Left ventricle myocardium inferior (tissue), 1 donor: ENCODE measurements at regions of chr3 and their contacts with region 1.

Region 1: GRCh38 chr3:168847291-168847883 is 751.7 kb upstream of the GOLIM4 start:
- DNase-seq: no peak
- H3K4me3 ChIP-seq: no peak overlapping the region
- H3K27ac ChIP-seq: no peak overlapping the region
- H3K4me1 ChIP-seq: no peaks in the 10 kb centered on the region
- H3K27me3 ChIP-seq: peaks cover 29% of the 10 kb centered on the region
- CTCF ChIP-seq: peak; percentile 75

Region 2: DNA sequence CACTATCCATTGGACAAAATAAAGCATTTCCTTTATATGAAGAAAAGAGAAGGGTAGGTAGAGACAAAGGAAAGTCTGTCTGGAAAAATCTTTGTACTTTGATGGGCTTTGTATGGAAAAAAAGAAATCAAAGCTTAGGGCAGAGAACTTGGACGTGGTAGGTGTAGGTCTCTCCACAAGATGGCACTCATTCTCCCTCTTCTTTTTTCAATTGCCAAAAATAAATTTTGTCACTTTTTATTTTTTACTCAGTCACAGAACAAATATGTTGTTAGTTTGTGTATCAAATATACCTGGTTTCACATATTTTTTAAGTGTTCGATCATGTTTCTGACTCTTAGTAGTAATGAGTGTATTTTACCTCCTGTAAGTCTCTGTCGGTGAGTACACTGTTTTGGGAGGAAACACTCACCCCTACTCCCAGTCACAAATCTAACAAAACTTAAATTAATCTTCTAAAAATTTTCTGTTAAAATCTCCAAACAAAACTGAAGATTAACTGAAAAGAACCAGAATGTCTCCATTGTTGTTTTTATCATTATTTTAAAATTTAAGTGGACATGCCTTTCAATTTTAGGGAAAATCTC is 335.9 kb before region 1 on chr3:
- intact Hi-C with region 1: loop called (anchors 10 kb)
- DNase-seq: no peak
- H3K4me3 ChIP-seq: no peak overlapping the region
- H3K27ac ChIP-seq: no peak overlapping the region
- H3K4me1 ChIP-seq: no peaks in the 10 kb centered on the region
- H3K27me3 ChIP-seq: peaks cover 27% of the 10 kb centered on the region
- CTCF ChIP-seq: peak; percentile 69